Calu3 (cell line): ENCODE measurements at regions of chr20 and their contacts with region 1.

Region 1: GRCh38 chr20:35395728-35396127 is 16.0 kb downstream of the UQCC1 start:
- DNase-seq: no peak
- H3K4me3 Mint-ChIP-seq: no peak overlapping the region
- H3K27ac Mint-ChIP-seq: no peak overlapping the region
- H3K4me1 Mint-ChIP-seq: peaks cover 17% of the 10 kb centered on the region
- H3K27me3 Mint-ChIP-seq: no peaks in the 10 kb centered on the region
- CTCF ChIP-seq: no peak

Region 2: DNA sequence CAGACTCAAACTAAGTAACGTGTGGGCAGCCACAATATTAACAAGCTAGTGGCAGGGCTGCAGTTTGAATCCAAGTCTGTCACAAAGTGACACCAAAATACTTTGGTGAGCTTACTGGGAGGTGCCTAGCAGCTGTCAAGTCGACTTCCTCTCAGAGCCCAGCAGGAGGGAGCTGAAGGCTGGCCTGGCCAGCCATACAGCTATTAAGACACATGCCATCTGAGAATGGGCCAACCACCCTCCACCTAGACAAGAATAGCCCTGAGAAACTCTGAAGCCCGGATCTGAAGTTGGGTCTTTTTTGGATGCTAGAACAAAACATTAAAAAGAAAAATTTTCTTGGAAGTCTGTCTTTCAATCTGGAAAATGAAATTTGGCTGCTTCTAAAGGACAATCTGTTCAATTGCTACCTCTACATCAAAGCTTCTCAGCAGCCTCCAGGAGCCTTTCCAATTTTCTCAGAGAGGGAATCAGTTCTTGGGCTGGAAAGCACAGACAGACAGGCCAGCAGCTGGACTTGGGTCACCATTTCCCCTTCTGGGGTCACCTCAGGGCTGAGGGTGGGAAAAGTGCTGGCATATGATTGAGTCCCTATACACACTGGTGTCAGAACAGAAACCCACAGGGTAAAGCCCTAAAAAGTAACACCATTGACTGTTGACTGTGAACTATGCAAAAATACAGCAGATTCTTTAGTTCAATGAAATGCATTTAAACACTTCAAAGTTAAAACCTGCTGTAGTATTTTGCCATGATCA is 26.9 kb before region 1 on chr20:
- CTCF ChIA-PET with region 1: interaction called, 10 read pairs
- intact Hi-C with region 1: no loop called
- DNase-seq: no peak
- H3K4me3 Mint-ChIP-seq: no peak overlapping the region
- H3K27ac Mint-ChIP-seq: no peak overlapping the region
- H3K4me1 Mint-ChIP-seq: no peaks in the 10 kb centered on the region
- H3K27me3 Mint-ChIP-seq: no peaks in the 10 kb centered on the region
- CTCF ChIP-seq: no peak